A549 (cell line): ENCODE measurements at regions of chr17 and their contacts with region 1.

Region 1: DNA sequence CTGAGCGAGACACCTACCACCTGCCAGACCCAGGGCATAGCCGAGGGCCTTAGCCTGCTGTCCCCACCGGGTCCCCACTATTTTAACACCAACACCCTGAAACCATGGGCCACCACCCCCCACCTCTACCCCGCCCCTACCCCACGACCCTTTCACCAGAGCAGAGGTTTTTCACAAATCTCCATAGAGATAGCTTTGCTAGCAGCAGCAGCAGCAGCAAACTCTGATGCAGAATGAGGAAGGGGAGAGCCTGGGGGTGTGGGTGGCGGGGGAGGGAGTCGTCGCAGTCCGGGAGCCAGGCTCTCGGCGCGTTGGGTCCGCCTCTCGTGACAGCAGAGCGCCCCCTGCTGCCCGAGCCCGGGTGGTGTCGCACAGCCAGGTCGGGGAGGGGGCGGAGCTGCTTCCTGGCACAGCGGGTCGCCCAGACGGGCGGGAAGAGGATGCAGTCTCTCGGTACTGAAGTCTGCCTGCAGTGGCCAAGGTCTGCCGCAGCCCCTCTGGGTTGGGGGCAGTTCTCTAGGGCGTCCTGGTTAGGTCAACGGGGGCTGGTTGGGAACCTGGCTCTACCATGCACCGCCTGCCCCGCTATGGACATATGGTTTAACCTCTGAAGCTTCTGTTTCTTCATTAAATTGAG is 38.1 kb upstream of the CCDC182 start:
- DNase-seq: peak; percentile 66 to 84
- ATAC-seq: peak; percentile 89 to 96
- H3K4me3 ChIP-seq: peak overlapping the region; percentile 20; the same call in 1 of the 3 replicates
- H3K27ac ChIP-seq: peak overlapping the region; percentile 45 to 79; a peak in 4 of 6 replicates
- H3K4me1 ChIP-seq: 0 out of 3 replicates have a peak, but pooled peaks cover 5% of the 10 kb centered on the region
- CTCF ChIP-seq: peak; percentile 95
- EP300 ChIP-seq: no peak
- POLR2A ChIP-seq: no peak
- RAD21 ChIP-seq: peak; percentile 81 to 91

Region 2: DNA sequence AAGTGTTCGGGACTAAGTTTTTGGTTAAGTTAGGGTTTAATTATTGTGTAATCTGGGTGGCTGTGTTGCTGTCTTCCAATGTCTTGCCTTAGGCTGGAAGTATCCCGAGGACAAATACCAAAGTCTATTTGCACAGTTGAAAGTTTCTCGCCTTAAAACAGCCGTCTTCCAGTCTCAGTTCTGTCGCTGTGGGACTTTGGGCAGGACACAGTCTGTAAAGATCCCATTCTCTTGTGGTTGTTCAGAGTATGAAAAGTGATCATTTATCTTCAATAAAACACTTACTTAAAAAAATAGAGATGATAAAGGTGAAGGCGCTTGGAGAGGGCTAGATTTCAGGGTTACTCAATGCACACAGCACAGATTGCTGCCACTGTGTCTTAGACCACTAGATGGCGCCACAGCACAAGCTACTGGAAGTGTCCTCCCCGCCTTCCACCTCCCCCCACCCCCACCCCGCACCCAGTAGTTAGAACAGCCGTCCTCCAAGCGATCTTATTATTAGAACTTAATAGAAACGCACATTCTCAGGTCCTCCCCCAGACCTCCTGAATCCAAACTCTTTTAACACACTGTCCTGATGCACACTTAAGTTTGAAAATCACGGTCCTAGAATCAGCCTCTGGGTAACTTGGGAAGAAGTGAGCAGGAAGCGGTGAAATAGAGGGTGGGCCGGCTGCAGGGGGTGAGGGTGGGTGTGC is 652.3 kb before region 1 on chr17:
- CTCF ChIA-PET with region 1: interaction called, 42 read pairs
- POLR2A ChIA-PET with region 1: no interaction called
- DNase-seq: peak; percentile 82 to 99
- ATAC-seq: peak; percentile 95 to 96
- H3K4me3 ChIP-seq: peak overlapping the region; percentile 38
- H3K27ac ChIP-seq: peak overlapping the region; percentile 66 to 84
- H3K4me1 ChIP-seq: no peaks in the 10 kb centered on the region
- CTCF ChIP-seq: peak; percentile 99
- EP300 ChIP-seq: no peak
- POLR2A ChIP-seq: no peak
- RAD21 ChIP-seq: peak; percentile 92 to 100

Region 3: GRCh38 chr17:57671667-57672632 is 111.3 kb before region 1 on chr17:
- CTCF ChIA-PET with region 1: interaction called, 22 read pairs
- POLR2A ChIA-PET with region 1: no interaction called
- DNase-seq: peak; percentile 81 to 95
- ATAC-seq: peak; percentile 93 to 99
- H3K4me3 ChIP-seq: no peak overlapping the region
- H3K27ac ChIP-seq: peak overlapping the region; percentile 36 to 48; a peak in 4 of 6 replicates
- H3K4me1 ChIP-seq: peaks cover 14% of the 10 kb centered on the region
- CTCF ChIP-seq: peak; percentile 98
- EP300 ChIP-seq: no peak
- POLR2A ChIP-seq: no peak
- RAD21 ChIP-seq: peak; percentile 93 to 96

Region 4: DNA sequence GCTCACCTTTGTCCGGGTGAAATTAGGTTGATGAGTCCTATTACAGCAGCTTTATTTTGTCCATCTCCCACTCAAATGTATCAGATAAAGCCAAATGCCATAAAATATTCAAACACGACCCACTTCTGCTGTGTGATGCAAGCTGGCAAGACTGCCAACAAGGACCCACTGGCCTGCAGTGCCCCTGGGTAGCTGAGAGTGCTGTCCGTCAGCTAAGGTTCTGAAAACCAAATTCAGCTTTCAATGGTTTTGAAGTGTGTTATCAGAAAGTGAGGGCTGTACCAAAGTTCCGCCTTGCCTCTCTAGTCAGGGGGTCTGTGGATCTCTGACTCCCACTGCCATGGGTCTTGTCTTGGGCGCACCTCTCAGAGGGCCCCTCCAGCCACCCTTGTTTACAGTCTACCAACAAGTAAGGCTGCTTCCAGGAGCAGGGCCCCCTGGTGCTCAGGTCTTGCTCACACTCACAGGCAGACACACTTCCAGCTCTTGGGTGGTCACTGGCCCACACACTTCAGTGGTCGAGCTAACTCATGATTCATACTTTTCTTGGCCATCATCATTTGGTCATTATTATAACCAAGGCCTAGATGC is 27.6 kb before region 1 on chr17:
- CTCF ChIA-PET with region 1: interaction called, 20 read pairs
- POLR2A ChIA-PET with region 1: no interaction called
- DNase-seq: no peak
- ATAC-seq: peak in 1 of 2 experiments; percentile 52; a peak in 2 of 6 replicates
- H3K4me3 ChIP-seq: no peak overlapping the region
- H3K27ac ChIP-seq: no peak overlapping the region
- H3K4me1 ChIP-seq: 0 out of 3 replicates have a peak, but pooled peaks cover 2% of the 10 kb centered on the region
- CTCF ChIP-seq: no peak
- EP300 ChIP-seq: no peak
- POLR2A ChIP-seq: no peak
- RAD21 ChIP-seq: no peak

Region 5: GRCh38 chr17:57803025-57803424 is 19.8 kb after region 1 on chr17:
- CTCF ChIA-PET with region 1: interaction called, 50 read pairs
- POLR2A ChIA-PET with region 1: no interaction called
- DNase-seq: no peak
- ATAC-seq: no peak
- H3K4me3 ChIP-seq: no peak overlapping the region
- H3K27ac ChIP-seq: no peak overlapping the region
- H3K4me1 ChIP-seq: no peaks in the 10 kb centered on the region
- CTCF ChIP-seq: no peak
- EP300 ChIP-seq: no peak
- POLR2A ChIP-seq: no peak
- RAD21 ChIP-seq: no peak

Region 6: GRCh38 chr17:57833179-57833939 is 50.1 kb after region 1 on chr17:
- CTCF ChIA-PET with region 1: interaction called, 40 read pairs
- POLR2A ChIA-PET with region 1: no interaction called
- DNase-seq: peak; percentile 59 to 68
- ATAC-seq: peak; percentile 71 to 79; a peak in 5 of 6 replicates
- H3K4me3 ChIP-seq: no peak overlapping the region
- H3K27ac ChIP-seq: peak overlapping the region in 1 of 2 experiments; percentile 46; a peak in 3 of 6 replicates
- H3K4me1 ChIP-seq: peaks cover 14% of the 10 kb centered on the region; the same call in 1 of the 3 replicates
- CTCF ChIP-seq: peak; percentile 99
- EP300 ChIP-seq: no peak
- POLR2A ChIP-seq: no peak
- RAD21 ChIP-seq: peak; percentile 86 to 88